Activated CD4-positive, alpha-beta T cell treated with anti-CD3 and anti-CD28 coated beads for 36 hours (primary cell): ENCODE measurements at regions of chr1 and their contacts with region 1.

Region 1: GRCh38 chr1:100351095-100351891 is 1.0 kb upstream of the CDC14A start:
- DNase-seq: peak; percentile 94
- ATAC-seq: peak; percentile 77
- H3K4me3 Mint-ChIP-seq: peak overlapping the region; percentile 97
- H3K27ac Mint-ChIP-seq: peak overlapping the region; percentile 97
- H3K4me1 Mint-ChIP-seq: peaks cover 25% of the 10 kb centered on the region
- H3K27me3 Mint-ChIP-seq: no peaks in the 10 kb centered on the region

Region 2: DNA sequence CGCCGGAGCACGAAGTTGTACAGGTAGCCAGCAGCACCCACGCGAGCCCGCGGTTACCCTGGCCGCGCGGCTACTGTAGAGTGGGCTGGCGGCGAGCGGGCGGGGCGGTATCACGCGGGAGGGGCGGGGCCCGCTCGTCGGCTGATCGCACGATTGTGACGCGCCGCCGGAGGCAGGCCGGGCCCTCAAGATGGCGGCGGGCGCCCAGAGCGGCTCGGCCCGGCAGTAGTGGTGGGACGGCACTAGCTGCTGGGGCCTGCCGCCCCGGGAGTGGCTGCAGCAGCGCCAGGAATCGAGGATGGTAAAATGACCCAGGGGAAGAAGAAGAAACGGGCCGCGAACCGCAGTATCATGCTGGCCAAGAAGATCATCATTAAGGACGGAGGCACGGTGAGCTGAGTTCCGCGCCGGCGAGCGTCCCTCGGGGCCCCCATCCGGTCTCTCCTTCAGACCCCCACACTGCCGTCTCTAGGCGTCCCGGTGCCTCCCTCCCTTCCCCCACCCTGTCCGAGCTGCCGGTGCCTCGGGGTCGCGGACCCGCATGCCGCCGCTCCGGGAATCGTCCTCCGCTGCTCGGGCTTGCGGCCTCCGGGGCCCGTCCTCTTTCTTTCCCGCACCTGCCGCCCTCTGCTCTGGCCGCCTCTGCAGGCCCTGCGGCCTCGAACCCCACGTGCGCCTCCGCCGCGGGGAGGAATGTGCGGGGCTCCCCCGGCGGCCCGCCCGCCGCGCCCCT is 313.2 kb before region 1 on chr1:
- CTCF ChIA-PET with region 1: no interaction called
- POLR2A ChIA-PET with region 1: no interaction called
- intact Hi-C with region 1: loop called (anchors 1 to 2 kb)
- DNase-seq: peak; percentile 95
- ATAC-seq: peak; percentile 80
- H3K4me3 Mint-ChIP-seq: peak overlapping the region; percentile 95
- H3K27ac Mint-ChIP-seq: peak overlapping the region; percentile 98
- H3K4me1 Mint-ChIP-seq: peaks cover 51% of the 10 kb centered on the region
- H3K27me3 Mint-ChIP-seq: no peaks in the 10 kb centered on the region

Region 3: DNA sequence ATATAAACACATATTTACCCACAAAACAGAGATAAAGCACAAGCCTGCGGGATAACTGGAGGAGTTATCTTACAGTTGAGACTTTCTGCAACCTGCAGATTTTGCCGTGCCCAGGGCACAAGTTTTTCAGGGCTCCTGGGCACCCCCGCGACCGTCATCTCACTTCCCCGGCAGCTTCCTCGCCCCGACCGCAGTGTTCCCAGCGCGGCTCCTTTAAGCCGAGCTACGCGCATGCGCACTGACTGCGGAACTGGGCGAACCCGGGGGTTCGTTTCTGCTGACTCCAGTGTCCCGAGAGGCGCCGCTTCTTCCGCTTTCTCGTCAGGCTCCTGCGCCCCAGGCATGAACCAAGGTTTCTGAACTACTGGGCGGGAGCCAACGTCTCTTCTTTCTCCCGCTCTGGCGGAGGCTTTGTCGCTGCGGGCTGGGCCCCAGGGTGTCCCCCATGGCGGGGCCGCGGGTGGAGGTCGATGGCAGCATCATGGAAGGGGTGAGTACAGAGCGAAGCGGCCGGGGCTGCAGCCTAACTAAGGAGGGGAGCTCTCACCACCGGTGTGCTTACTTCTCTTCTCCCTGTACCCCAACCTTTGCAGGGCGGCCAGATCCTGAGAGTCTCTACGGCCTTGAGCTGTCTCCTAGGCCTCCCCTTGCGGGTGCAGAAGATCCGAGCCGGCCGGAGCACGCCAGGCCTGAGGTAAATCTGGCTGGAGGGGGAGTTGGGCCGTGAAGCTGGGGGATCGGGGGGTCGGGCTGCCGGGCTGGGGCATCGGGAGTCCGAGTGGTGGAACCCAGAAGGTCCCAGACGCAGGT is 85.2 kb before region 1 on chr1 and contains the start of gene RTCA:
- CTCF ChIA-PET with region 1: interaction called, 8 read pairs
- POLR2A ChIA-PET with region 1: interaction called, 7 read pairs
- intact Hi-C with region 1: loop called (anchors 1 kb)
- DNase-seq: peak; percentile 97
- ATAC-seq: peak; percentile 93
- H3K4me3 Mint-ChIP-seq: peak within 1 kb of the TSS; percentile 100
- H3K27ac Mint-ChIP-seq: peak within 1 kb of the TSS; percentile 99
- H3K4me1 Mint-ChIP-seq: peaks cover 32% of the 10 kb centered on the region
- H3K27me3 Mint-ChIP-seq: no peaks in the 10 kb centered on the region
- total RNA-seq, gene RTCA: 47.8 to 53.0 TPM

Region 4: DNA sequence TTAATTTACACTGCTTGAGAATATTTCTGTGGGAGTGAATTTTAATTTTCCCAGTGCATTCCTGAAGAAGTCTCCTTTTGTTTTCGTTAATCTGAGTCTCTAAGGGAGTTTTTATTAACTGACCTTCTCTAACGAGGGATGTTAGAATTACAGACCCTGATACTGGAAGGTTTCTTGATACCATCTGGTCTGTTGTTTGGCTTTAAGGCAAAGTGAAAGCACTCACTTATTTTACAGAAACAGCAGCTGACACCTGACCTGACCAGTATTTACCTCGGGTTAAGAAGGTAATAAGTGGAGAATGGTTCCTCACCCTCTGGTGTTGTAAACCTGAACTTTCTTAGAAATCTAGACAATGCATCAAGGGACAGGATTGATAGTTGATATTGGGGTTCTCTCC is 13.4 kb after region 1 on chr1:
- CTCF ChIA-PET with region 1: interaction called, 30 read pairs
- POLR2A ChIA-PET with region 1: interaction called, 5 read pairs
- intact Hi-C with region 1: no loop called
- DNase-seq: no peak
- ATAC-seq: no peak
- H3K4me3 Mint-ChIP-seq: no peak overlapping the region
- H3K27ac Mint-ChIP-seq: peak overlapping the region; percentile 75
- H3K4me1 Mint-ChIP-seq: peaks cover 75% of the 10 kb centered on the region
- H3K27me3 Mint-ChIP-seq: no peaks in the 10 kb centered on the region

Region 5: DNA sequence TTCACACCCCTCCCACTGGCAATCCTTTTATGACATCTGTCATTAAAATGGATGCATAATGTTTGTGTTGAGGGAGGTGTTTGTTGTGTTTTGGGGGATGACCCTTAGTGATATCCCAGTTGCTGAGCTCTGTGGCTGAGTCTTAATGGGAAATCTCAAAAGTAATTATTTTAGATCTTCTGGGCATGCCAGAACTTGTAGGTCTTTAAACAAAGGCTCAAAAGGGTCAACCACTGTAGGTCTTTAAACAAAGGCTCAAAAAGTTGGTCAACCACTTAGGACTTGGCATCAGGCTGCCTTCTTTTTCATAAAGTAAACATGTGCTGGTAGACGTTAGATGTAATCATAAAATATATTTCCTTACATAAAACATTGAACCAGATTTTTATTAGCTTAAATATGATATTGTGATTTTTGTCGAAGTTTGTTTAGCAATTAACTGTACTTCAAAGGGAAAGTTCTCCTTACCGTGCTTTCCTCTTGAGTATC is 79.1 kb after region 1 on chr1:
- CTCF ChIA-PET with region 1: interaction called, 11 read pairs
- POLR2A ChIA-PET with region 1: no interaction called
- intact Hi-C with region 1: no loop called
- DNase-seq: no peak
- ATAC-seq: no peak
- H3K4me3 Mint-ChIP-seq: no peak overlapping the region
- H3K27ac Mint-ChIP-seq: peak overlapping the region; percentile 10
- H3K4me1 Mint-ChIP-seq: peaks cover 66% of the 10 kb centered on the region
- H3K27me3 Mint-ChIP-seq: no peaks in the 10 kb centered on the region

Region 6: GRCh38 chr1:100523038-100523652 is 171.9 kb after region 1 on chr1:
- CTCF ChIA-PET with region 1: no interaction called
- POLR2A ChIA-PET with region 1: no interaction called
- intact Hi-C with region 1: no loop called
- DNase-seq: no peak
- ATAC-seq: no peak
- H3K4me3 Mint-ChIP-seq: no peak overlapping the region
- H3K27ac Mint-ChIP-seq: no peak overlapping the region
- H3K4me1 Mint-ChIP-seq: peaks cover 2% of the 10 kb centered on the region
- H3K27me3 Mint-ChIP-seq: no peaks in the 10 kb centered on the region

Region 7: DNA sequence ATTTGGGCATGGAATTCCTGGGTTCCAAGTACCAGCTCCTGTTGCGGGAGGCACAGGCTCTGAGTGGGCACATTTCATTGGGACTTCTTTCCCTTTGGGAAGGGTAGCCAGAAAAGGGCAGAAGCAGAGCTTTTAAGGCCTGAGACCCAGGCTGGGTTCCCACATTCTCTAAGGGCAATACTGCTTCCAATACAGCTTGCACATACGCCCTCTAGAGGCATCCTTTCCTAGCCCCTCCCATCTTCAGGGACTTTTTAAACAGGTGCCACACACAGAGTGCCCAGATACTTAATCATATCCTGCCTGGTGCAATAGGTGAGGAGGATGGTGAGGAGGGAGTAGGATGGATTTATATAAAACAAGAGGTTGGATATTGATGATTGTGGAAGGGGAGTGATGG is 192.3 kb after region 1 on chr1:
- CTCF ChIA-PET with region 1: interaction called, 4 read pairs
- POLR2A ChIA-PET with region 1: no interaction called
- intact Hi-C with region 1: loop called in 1 of 2 experiments (anchors 2 kb)
- DNase-seq: peak; percentile 67
- ATAC-seq: peak; percentile 87
- H3K4me3 Mint-ChIP-seq: no peak overlapping the region
- H3K27ac Mint-ChIP-seq: no peak overlapping the region
- H3K4me1 Mint-ChIP-seq: peaks cover 6% of the 10 kb centered on the region
- H3K27me3 Mint-ChIP-seq: peaks cover 25% of the 10 kb centered on the region

Region 8: GRCh38 chr1:100643471-100644196 is 292.3 kb after region 1 on chr1:
- CTCF ChIA-PET with region 1: no interaction called
- POLR2A ChIA-PET with region 1: no interaction called
- intact Hi-C with region 1: no loop called
- DNase-seq: no peak
- ATAC-seq: no peak
- H3K4me3 Mint-ChIP-seq: no peak overlapping the region
- H3K27ac Mint-ChIP-seq: no peak overlapping the region
- H3K4me1 Mint-ChIP-seq: no peaks in the 10 kb centered on the region
- H3K27me3 Mint-ChIP-seq: peaks cover 9% of the 10 kb centered on the region

Region 9: GRCh38 chr1:100941098-100941527 is 589.8 kb after region 1 on chr1:
- CTCF ChIA-PET with region 1: no interaction called
- POLR2A ChIA-PET with region 1: no interaction called
- intact Hi-C with region 1: no loop called
- DNase-seq: peak; percentile 45
- ATAC-seq: peak; percentile 82
- H3K4me3 Mint-ChIP-seq: peak overlapping the region; percentile 67
- H3K27ac Mint-ChIP-seq: peak overlapping the region; percentile 94
- H3K4me1 Mint-ChIP-seq: peaks cover 45% of the 10 kb centered on the region
- H3K27me3 Mint-ChIP-seq: peaks cover 2% of the 10 kb centered on the region